ENCODE measurements at regions of chr1 and their contacts with region 1.

Region 1: DNA sequence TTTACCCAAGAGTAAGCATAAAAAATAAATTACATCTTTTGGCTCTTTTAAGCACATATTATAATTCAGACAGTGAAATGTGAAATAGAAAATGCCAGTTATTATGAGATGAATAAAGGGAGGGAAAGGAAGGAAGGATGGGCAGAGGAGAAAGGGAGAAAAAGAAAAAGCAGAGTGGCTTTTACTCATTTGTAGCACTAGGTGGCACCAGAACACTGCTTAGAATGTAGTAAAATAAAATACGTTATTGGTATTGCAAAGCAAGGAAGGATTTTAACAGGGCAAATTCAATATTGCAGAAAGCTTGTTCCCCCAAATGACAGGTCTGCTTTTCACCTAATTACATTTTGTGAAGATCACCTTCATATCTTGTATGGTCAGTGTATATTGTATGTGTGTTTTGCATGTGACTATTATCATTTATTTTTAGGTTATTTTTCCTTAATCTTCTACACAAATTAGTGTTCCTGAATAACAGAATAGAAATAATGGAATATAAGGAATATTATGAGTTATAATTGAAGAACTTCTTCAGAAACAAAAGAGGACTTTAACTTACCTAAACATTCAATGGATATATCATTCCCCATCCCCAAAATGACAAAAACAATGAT is 9.1 kb upstream of the PCNX2 start:
- DNase-seq: peak in 4 of 14 experiments; percentile 15 to 68 (median 58)
- ATAC-seq: peak; percentile 73
- H3K4me3 ChIP-seq: no peak overlapping the region
- H3K4me3 Mint-ChIP-seq: no peak overlapping the region
- H3K27ac ChIP-seq: no peak overlapping the region
- H3K27ac Mint-ChIP-seq: no peak overlapping the region
- H3K4me1 ChIP-seq: no peaks in the 10 kb centered on the region
- H3K4me1 Mint-ChIP-seq: no peaks in the 10 kb centered on the region
- H3K27me3 ChIP-seq: no peaks in the 10 kb centered on the region
- H3K27me3 Mint-ChIP-seq: peaks cover 16% of the 10 kb centered on the region
- CTCF ChIP-seq: peak; percentile 95

Region 2: DNA sequence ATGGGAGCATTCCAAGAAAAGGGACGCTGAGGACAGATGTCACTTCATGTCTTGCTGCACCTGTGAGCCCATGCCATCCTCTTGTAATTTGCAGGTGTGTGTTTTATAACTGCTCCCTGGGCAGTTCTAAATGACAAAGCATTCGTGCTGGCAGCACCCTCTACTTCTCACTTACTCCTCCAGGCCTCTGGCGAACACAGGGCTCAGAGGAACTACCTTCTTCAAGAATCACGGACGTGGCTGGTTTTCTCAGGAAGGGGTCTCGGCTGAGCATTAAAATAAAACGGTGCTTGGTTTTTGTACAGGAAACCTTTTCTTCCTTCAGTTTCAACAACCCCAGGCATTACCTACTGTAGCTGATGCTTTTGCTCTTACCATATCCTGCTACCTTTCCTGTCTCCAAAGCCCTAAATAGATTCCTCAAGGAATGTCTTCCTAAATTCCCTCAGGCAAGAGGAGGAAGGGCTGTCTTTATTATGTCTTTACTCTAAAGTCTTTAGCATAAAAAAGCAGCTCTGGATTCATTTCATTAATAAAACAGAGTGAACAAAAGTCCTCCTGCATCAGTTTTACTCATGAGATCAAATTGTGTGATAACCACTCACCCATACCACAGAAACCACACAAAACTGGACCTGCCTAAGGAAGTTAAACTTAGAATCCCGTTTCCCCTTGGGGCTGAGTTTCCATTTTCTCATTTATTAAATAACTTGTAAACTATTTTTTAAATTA is 578.4 kb before region 1 on chr1:
- CTCF ChIA-PET with region 1: no interaction called
- POLR2A ChIA-PET with region 1: no interaction called
- intact Hi-C with region 1: no loop called
- DNase-seq: no peak
- ATAC-seq: no peak
- H3K4me3 ChIP-seq: no peak overlapping the region
- H3K4me3 Mint-ChIP-seq: no peak overlapping the region
- H3K27ac ChIP-seq: no peak overlapping the region
- H3K27ac Mint-ChIP-seq: no peak overlapping the region
- H3K4me1 ChIP-seq: peaks cover 6% of the 10 kb centered on the region
- H3K4me1 Mint-ChIP-seq: peaks cover 12% of the 10 kb centered on the region
- H3K27me3 ChIP-seq: no peaks in the 10 kb centered on the region
- H3K27me3 Mint-ChIP-seq: peaks cover 4% of the 10 kb centered on the region
- CTCF ChIP-seq: no peak

Region 3: DNA sequence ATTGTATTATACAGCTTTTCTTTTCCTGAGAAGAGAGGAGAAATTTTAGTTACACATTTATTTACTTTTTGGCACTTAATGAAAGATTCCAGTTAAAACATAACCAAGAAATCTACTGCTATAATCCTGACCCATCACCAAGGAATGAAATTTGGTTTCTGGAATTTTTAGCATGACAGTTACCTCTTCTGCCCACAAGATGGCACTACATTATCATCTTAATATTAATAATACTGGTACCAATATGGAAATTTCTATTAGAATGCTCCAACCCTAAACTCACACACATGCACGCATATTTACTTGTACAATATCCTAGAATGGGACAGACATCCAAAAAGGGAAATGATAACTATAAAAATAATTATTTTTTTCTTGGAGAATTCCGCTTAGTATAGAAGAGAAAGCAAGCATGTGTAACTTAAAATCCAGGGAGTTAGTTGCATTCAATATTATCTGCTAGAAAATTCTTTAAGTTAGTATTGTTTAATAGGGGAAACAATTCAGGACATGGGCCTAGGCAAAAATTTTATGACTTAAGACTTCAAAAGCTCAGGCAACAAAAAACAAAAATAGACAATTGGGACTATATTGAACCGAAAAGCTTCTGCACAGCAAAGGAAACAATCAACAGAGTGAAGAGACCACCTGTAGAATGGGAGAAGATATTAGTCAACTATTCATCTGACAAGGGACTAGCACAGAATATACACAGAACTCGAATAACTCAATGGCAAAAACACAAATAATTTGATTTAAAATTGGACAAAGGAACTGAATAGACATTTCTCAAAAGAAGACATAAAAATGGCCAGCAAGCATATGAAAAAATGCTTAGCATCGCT is 60.3 kb after region 1 on chr1:
- CTCF ChIA-PET with region 1: no interaction called
- POLR2A ChIA-PET with region 1: no interaction called
- intact Hi-C with region 1: loop called in 1 of 2 experiments (anchors 5 kb)
- DNase-seq: peak in 2 of 14 experiments; percentile 14 to 22
- ATAC-seq: no peak
- H3K4me3 ChIP-seq: no peak overlapping the region
- H3K4me3 Mint-ChIP-seq: no peak overlapping the region
- H3K27ac ChIP-seq: no peak overlapping the region
- H3K27ac Mint-ChIP-seq: no peak overlapping the region
- H3K4me1 ChIP-seq: no peaks in the 10 kb centered on the region
- H3K4me1 Mint-ChIP-seq: no peaks in the 10 kb centered on the region
- H3K27me3 ChIP-seq: no peaks in the 10 kb centered on the region
- H3K27me3 Mint-ChIP-seq: no peaks in the 10 kb centered on the region
- CTCF ChIP-seq: peak; percentile 65

Region 4: DNA sequence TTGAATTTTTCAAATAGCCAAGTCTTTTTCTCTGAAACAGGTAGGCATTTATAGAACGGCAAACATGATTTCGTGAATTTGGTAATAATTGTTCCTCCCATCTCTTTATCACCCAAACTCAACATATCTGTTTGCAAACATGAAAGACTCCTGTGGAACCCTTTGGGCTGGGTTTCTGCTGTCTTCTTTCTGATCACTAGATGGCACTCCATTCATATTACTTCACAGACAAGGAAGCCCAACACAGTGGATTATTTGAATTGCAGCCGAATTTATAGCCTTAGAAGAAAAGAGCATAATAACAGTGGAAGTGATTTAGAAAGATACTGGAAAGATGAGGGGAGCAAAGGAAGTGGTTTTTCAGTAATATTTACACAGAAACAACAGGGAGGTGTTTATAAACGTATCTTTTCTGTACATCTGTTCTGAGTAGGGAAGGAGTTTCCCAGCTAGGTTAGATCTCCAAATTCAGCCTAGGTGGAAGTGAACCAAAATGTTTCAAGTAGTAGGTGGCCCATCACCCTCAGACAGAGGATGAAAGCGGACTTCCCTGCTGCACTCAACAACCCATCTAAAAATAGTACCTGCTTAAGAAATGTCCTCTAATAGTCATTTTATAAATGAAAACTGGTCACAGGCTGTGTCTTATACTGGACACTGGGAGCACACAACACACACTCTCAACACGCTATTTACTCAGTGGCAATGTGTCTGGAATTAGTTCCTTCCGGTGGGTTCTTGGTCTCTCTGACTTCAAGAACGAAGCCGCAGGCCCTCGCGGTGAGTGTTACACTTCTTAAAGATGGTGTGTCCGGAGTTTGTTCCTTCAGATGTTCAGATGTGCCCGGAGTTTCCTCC is 90.5 kb after region 1 on chr1:
- CTCF ChIA-PET with region 1: no interaction called
- POLR2A ChIA-PET with region 1: no interaction called
- intact Hi-C with region 1: no loop called
- DNase-seq: peak in 4 of 14 experiments; percentile 10 to 52 (median 44)
- ATAC-seq: peak; percentile 46
- H3K4me3 ChIP-seq: no peak overlapping the region
- H3K4me3 Mint-ChIP-seq: no peak overlapping the region
- H3K27ac ChIP-seq: no peak overlapping the region
- H3K27ac Mint-ChIP-seq: no peak overlapping the region
- H3K4me1 ChIP-seq: no peaks in the 10 kb centered on the region
- H3K4me1 Mint-ChIP-seq: no peaks in the 10 kb centered on the region
- H3K27me3 ChIP-seq: peaks cover 2 to 8% of the 10 kb centered on the region in 2 experiments
- H3K27me3 Mint-ChIP-seq: peaks cover 48% of the 10 kb centered on the region
- CTCF ChIP-seq: peak; percentile 68

Region 5: DNA sequence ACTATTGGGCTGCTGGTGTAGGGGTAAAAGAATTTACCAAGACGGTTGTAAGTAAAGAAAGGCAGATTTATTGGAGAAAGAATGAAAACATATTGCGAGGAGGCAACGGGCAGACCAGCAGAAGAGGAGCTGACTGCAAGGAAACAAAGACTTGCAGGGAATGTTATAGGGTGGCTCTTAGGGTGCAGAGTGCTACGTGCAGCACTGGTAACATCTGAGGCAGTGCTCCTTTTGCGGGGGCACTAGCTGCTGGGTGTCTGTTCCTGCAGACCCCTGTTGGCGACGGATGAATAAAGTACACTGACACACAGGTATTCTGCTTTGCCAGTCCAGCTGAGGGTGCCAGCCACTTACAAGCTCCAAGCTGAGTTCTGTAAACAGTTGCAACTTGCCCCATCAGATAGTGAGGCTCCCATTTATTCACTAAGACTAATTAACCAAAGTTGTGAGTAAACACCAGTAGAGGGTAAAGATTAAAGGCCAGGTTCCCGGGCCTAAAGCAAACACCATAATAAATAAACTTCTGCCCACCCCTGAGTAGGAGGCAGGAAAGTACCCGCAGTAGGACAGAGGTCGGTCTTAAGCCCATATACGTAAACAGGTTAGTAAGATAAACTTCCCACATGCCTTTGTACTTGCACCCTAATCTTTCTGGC is 169.1 kb after region 1 on chr1:
- CTCF ChIA-PET with region 1: no interaction called
- POLR2A ChIA-PET with region 1: no interaction called
- intact Hi-C with region 1: no loop called
- DNase-seq: no peak
- ATAC-seq: no peak
- H3K4me3 ChIP-seq: no peak overlapping the region
- H3K4me3 Mint-ChIP-seq: no peak overlapping the region
- H3K27ac ChIP-seq: no peak overlapping the region
- H3K27ac Mint-ChIP-seq: no peak overlapping the region
- H3K4me1 ChIP-seq: no peaks in the 10 kb centered on the region
- H3K4me1 Mint-ChIP-seq: no peaks in the 10 kb centered on the region
- H3K27me3 ChIP-seq: peaks cover 4 to 10% of the 10 kb centered on the region in 2 experiments
- H3K27me3 Mint-ChIP-seq: peaks cover 31% of the 10 kb centered on the region
- CTCF ChIP-seq: no peak

Region 6: GRCh38 chr1:233790662-233791375 is 486.2 kb after region 1 on chr1:
- CTCF ChIA-PET with region 1: interaction called, 9 read pairs
- POLR2A ChIA-PET with region 1: no interaction called
- intact Hi-C with region 1: loop called in 1 of 2 experiments (anchors 1 kb)
- DNase-seq: peak in 7 of 14 experiments; percentile 2 to 70 (median 32)
- ATAC-seq: peak; percentile 58
- H3K4me3 ChIP-seq: no peak overlapping the region
- H3K4me3 Mint-ChIP-seq: no peak overlapping the region
- H3K27ac ChIP-seq: no peak overlapping the region
- H3K27ac Mint-ChIP-seq: no peak overlapping the region
- H3K4me1 ChIP-seq: no peaks in the 10 kb centered on the region
- H3K4me1 Mint-ChIP-seq: no peaks in the 10 kb centered on the region
- H3K27me3 ChIP-seq: peaks cover 6 to 7% of the 10 kb centered on the region in 2 experiments
- H3K27me3 Mint-ChIP-seq: peaks cover 37% of the 10 kb centered on the region
- CTCF ChIP-seq: peak; percentile 79

Region 7: GRCh38 chr1:234065794-234066447 is 761.3 kb after region 1 on chr1:
- CTCF ChIA-PET with region 1: interaction called, 10 read pairs
- POLR2A ChIA-PET with region 1: no interaction called
- intact Hi-C with region 1: loop called (anchors 1 kb)
- DNase-seq: peak; percentile 36 to 74 (median 54)
- ATAC-seq: no peak
- H3K4me3 ChIP-seq: no peak overlapping the region
- H3K4me3 Mint-ChIP-seq: no peak overlapping the region
- H3K27ac ChIP-seq: no peak overlapping the region
- H3K27ac Mint-ChIP-seq: no peak overlapping the region
- H3K4me1 ChIP-seq: peaks cover 4% of the 10 kb centered on the region
- H3K4me1 Mint-ChIP-seq: no peaks in the 10 kb centered on the region
- H3K27me3 ChIP-seq: peaks cover 3 to 4% of the 10 kb centered on the region in 2 experiments
- H3K27me3 Mint-ChIP-seq: peaks cover 14% of the 10 kb centered on the region
- CTCF ChIP-seq: peak; percentile 86

Measured in CD4-positive, alpha-beta T cell (primary cell).